ENCODE measurements at regions of chr12 and their contacts with region 1.

Region 1: DNA sequence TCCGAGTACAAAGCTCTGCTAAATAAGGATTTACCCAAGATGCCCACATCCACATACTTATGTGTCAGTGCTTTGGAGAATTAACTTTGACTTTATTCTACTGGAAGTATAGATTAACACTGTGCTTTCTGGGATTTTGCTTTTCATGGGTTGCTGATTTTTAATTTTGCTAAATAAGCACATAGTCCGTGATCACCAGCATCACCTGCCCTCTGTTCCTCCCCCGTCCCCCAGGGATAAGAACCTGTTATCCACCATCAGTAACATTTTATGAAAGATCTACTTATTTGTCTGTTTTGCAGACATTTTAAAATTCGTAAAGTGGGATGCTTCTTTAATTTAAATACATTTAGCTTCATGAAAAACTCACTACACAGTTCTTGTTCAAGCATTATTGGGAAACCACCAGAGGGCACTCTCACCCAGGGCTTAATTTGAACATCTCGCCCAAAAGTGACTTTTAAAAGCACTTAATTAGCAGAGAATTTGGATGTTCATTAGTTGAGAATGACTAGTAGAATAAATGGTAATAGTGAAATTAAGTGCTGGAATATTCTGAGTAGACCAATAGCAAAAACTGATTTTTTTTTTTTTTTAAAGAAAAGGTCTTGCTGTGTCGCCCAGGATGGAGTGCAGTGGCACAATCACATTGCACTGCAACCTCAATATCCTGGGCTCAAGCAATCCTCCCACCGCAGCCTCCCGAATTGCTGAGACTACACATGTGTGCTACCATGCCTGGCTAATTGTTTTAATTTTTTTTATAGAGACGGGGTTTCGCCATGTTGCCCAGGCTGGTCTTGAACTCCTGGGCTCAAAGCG is 35.7 kb downstream of the MRPL42 start:
- DNase-seq: peak in 2 of 5 donors; percentile 33 to 39
- ATAC-seq: peak in 1 of 4 donors; percentile 28
- H3K4me3 ChIP-seq: no peak overlapping the region
- H3K27ac ChIP-seq: no peak overlapping the region
- H3K4me1 ChIP-seq: peaks cover 0 to 11% (median 0%) of the 10 kb centered on the region in 12 donors
- H3K27me3 ChIP-seq: no peaks in the 10 kb centered on the region
- CTCF ChIP-seq: peak; percentile 66 to 87 (median 81)
- POLR2A ChIP-seq: no peak

Region 2: DNA sequence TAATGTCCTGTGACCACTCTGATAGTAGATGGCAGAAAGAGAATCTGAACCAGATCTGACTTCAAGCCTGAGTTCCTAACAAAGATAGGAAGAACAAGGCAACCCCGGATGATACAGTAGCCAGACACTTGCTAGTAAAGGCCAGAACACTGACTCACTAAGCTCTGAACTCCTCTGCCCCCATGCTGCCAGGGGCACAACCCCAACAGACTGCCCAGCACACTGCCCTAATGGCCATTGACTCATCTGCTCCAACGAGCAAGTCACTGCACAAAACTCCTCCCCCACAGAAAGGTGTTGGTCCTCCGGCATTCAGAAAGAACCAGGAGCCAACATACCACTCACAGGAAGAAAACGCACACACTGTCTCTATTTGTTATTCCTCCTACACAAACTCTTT is 304.9 kb before region 1 on chr12:
- intact Hi-C with region 1: no loop called
- DNase-seq: no peak
- ATAC-seq: peak in 1 of 4 donors; percentile 14
- H3K4me3 ChIP-seq: no peak overlapping the region
- H3K27ac ChIP-seq: peak overlapping the region in 1 of 12 donors; percentile 5
- H3K4me1 ChIP-seq: peaks cover 0 to 20% (median 2%) of the 10 kb centered on the region in 12 donors
- H3K27me3 ChIP-seq: no peaks in the 10 kb centered on the region
- CTCF ChIP-seq: no peak
- POLR2A ChIP-seq: no peak

Region 3: DNA sequence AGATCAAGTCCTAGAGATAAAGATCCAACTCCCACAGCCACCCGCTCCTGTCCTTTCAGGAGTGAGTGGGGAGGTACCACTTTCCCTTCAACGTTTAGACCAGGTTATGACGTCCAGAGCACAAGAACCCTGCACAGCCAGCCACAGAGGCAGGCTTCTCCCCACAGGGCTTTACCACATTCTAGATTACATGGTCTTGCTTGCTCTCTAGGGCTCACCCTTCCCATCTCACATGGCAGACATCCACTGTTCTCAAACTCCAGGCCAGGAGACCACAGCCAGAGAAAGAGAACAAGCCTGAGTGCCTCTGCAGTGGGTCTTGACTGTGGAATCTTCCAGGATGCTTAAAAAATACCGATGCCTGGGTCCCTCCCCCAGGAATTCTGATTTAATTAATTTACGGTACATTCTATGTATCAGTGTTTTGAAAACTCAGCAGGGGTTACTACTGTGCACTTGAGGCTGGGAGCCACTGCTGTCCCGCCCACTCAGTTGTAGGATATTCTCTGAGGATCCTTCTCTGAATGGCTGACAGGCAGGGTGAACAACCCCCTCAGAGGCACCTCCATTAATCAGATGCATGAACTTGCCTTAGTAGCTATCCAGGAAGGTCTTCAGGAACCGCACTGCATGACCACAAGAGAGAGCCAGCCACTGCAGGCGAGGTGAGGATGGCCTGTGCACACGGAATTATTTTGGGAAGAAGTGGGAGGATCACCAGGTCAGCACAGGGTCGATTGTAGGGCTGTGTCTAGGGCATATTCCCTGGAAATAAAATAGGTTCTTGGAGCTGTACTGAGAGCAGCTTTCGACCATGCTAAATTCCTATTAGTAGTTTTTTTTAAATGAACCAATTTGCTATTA is 48.0 kb after region 1 on chr12:
- intact Hi-C with region 1: loop called in 1 of 10 experiments (anchors 5 kb)
- DNase-seq: no peak
- ATAC-seq: no peak
- H3K4me3 ChIP-seq: no peak overlapping the region
- H3K27ac ChIP-seq: no peak overlapping the region
- H3K4me1 ChIP-seq: no peaks in the 10 kb centered on the region
- H3K27me3 ChIP-seq: no peaks in the 10 kb centered on the region
- CTCF ChIP-seq: peak in 1 of 12 donors; percentile 9
- POLR2A ChIP-seq: no peak

Region 4: DNA sequence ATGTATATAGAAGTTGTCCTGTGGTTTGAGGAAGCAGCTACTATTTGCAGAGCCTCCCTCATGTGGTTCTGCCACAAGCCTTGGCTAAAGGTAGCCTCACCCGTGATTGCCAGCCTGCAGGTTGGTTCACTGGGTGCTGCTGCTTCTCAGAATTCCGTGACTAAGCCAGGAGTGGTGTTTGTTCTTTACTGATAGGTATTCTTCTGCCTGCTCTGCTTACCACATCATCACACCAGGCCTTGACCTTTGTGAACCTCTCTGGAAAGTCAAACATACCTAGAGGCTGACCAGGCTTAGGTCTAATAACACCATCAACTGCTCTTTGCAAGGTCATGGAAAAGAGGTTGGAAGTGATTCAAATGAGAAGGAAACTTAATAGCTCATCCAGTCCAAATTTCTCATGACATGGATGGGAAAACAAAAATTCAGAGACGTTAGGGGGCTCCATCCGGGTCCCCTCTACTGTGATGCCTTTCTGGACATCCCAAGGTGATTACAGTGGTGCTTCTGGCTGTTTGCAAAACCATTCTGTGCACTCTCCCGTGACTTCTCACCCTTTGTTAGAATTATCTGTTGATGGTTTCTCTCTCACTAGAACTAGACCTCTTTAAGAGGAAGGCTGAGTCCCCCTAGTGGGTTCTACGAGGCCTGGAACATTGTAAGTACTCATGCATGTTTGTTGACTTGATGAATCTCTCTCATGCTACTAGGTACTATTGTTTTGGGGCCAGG is 61.0 kb after region 1 on chr12:
- intact Hi-C with region 1: loop called in 9 of 10 experiments (anchors 2 to 10 kb)
- DNase-seq: no peak
- ATAC-seq: peak in 2 of 4 donors; percentile 24 to 50
- H3K4me3 ChIP-seq: no peak overlapping the region
- H3K27ac ChIP-seq: no peak overlapping the region
- H3K4me1 ChIP-seq: peaks cover 0 to 4% (median 0%) of the 10 kb centered on the region in 12 donors
- H3K27me3 ChIP-seq: peaks cover 0 to 2% (median 0%) of the 10 kb centered on the region in 9 donors
- CTCF ChIP-seq: peak in 5 of 12 donors; percentile 18 to 39 (median 31)
- POLR2A ChIP-seq: no peak

Region 5: DNA sequence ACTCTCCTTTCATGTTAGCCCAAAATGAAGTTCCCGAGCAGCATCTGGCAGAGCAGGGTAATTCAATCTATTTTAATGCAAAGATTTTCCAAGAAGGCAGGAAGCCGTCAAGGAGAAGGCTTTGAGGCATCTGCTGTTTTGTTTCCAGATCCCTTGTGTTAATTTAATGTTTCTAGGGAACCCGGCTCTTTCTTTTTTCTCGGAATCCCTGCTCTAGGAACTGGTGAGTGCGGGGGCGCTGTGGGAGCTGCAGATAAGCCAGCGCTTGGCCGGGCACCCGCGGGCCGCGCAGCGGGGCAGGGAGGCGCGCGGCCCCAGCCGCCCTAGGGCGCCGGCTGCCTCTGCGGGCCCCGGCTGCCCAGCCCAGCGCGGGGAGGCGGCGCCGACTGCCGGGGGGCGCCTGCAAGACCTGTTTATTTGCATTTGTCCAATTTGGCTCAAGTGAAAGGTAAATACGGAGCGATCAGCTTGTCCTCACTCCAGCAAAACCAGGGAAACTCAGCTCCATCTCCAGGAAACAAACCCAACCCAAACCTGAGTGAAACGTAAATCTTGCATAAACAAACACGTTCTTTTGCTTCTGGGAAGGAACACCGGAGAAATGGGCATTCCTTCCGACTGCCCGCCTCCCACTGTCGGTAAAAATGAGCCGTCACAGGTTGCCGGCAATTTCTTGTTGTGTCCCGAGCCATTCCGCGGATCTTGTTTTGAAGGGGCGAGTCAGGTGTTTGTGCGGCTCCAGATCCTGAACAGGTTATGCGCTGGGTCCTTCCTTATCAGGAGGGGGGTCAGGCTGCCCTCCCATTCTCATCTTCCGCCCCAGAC is 239.3 kb after region 1 on chr12:
- intact Hi-C with region 1: loop called in 1 of 10 experiments (anchors 10 kb)
- DNase-seq: peak; percentile 73 to 85 (median 80)
- ATAC-seq: peak; percentile 78 to 97 (median 92)
- H3K4me3 ChIP-seq: peak overlapping the region; percentile 33 to 70 (median 64)
- H3K27ac ChIP-seq: peak overlapping the region; percentile 88 to 95 (median 93)
- H3K4me1 ChIP-seq: peaks cover 0 to 85% (median 60%) of the 10 kb centered on the region in 12 donors
- H3K27me3 ChIP-seq: no peaks in the 10 kb centered on the region
- CTCF ChIP-seq: peak in 9 of 12 donors; percentile 17 to 54 (median 36)
- POLR2A ChIP-seq: peak in 1 of 2 donors; percentile 13

Region 6: GRCh38 chr12:93766796-93767523 is 263.9 kb after region 1 on chr12:
- intact Hi-C with region 1: loop called in 5 of 10 experiments (anchors 10 kb)
- DNase-seq: peak in 4 of 5 donors; percentile 37 to 60 (median 50)
- ATAC-seq: peak; percentile 79 to 88 (median 82)
- H3K4me3 ChIP-seq: peak overlapping the region in 1 of 12 donors; percentile 5
- H3K27ac ChIP-seq: peak overlapping the region; percentile 27 to 72 (median 55)
- H3K4me1 ChIP-seq: peaks cover 0 to 56% (median 42%) of the 10 kb centered on the region in 12 donors
- H3K27me3 ChIP-seq: no peaks in the 10 kb centered on the region
- CTCF ChIP-seq: peak; percentile 38 to 81 (median 64)
- POLR2A ChIP-seq: no peak

Region 7: DNA sequence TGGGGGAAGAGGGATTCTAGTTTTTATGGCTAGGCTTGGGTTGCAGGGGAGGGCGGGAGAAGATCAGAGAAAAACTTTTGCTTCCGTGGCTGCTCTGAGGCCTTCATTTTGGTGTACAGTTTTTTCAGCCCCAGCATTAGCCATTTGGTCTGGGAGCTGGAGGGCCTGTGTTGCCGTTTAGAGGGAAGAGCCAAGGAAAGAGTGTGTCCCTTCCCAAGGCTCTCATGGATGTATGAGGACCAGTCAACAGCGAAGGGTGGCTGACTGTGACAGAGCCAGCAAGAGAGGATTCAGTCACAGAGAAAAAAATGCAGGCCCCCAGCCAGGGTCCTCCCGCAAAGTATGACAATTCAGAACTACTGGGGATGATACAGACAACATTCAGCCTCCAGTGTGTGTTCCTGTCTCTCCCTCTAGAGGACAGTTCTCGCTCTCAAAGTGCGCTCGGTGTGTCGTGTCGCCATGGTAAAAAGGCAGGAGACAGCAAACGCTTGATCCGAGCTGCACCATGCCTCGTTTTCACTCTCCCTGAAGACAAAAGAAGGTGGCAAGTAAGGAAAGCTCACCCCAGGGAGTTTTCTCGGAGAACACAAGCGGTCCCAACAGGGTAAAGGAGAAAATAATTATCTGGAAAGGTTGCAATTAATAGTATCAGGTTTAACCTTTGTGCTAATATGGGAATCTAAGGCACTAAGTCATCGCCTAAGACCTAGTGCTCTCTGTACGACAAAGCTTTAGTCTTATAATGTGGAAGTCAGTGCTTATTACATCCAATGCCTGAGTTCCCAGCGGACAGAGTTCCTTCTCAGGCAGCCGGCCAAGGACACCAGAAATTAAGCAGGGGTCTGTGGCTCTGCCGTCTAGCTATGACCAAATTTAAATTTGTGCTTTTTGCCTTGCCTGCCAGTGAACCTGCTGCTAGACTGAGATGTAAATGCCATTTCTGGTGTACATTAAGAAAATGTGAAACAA is 488.1 kb after region 1 on chr12:
- intact Hi-C with region 1: loop called in 2 of 10 experiments (anchors 10 kb)
- DNase-seq: peak in 4 of 5 donors; percentile 49 to 70 (median 59)
- ATAC-seq: peak; percentile 93 to 96 (median 94)
- H3K4me3 ChIP-seq: peak overlapping the region in 7 of 12 donors; percentile 11 to 34 (median 17)
- H3K27ac ChIP-seq: peak overlapping the region in 6 of 12 donors; percentile 22 to 61 (median 53)
- H3K4me1 ChIP-seq: peaks cover 0 to 16% (median 0%) of the 10 kb centered on the region in 12 donors
- H3K27me3 ChIP-seq: no peaks in the 10 kb centered on the region
- CTCF ChIP-seq: peak; percentile 18 to 68 (median 50)
- POLR2A ChIP-seq: no peak